ENCODE measurements at regions of chr4 and their contacts with region 1.

Region 1: GRCh38 chr4:89129080-89129640 is 17.8 kb downstream of the TIGD2 start:
- H3K4me3 Mint-ChIP-seq: no peak overlapping the region
- H3K27ac Mint-ChIP-seq: no peak overlapping the region
- H3K4me1 Mint-ChIP-seq: no peaks in the 10 kb centered on the region
- H3K27me3 Mint-ChIP-seq: no peaks in the 10 kb centered on the region

Region 2: DNA sequence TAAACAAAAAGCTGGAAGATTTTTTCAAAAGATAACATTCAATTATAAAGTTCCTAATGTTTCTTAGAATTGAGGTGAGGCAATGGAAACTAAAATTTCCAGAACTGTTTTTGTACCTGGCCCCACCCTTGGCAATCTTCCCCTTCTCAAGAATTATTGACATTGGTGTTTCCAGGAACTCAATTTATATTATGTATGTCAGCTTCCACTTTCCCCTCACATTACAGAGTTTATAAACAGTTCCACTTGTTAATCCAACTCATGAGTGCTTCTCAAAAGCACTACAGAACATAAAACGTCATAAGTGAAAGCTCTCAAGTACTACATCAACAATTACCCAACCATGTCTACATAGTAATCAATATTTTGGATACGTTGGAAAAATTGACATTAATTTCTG is 179.6 kb before region 1 on chr4:
- intact Hi-C with region 1: no loop called
- H3K4me3 Mint-ChIP-seq: no peak overlapping the region
- H3K27ac Mint-ChIP-seq: no peak overlapping the region
- H3K4me1 Mint-ChIP-seq: peaks cover 21% of the 10 kb centered on the region
- H3K27me3 Mint-ChIP-seq: no peaks in the 10 kb centered on the region

Region 3: DNA sequence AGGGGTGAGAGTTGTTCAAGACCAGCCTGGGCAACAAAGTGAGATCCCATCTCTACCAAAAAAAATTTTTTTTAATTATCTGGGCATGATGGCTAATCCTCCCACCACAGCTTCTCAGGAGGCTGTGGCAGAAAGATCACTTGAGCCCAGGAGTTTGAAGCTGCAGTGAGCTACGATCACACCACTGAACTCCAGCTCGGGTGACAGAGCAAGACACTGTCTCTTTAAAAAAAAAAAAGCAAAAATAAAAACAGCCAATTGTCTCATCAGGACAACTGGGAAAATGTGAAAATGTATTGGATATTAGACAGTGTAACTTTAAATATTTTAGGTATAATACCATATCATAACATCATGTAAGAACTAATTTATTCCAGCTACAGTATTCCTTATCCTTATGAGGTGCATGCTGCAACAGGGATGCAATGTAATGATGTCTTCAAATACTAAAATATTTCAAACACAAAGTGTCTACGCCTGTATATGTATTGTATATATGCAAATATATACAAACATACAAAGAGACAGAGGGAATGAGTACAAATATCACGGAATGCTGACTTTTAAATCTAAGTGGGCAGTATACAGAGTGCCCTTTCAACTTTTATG is 89.3 kb before region 1 on chr4:
- intact Hi-C with region 1: no loop called
- H3K4me3 Mint-ChIP-seq: no peak overlapping the region
- H3K27ac Mint-ChIP-seq: no peak overlapping the region
- H3K4me1 Mint-ChIP-seq: peaks cover 4% of the 10 kb centered on the region
- H3K27me3 Mint-ChIP-seq: no peaks in the 10 kb centered on the region

Region 4: DNA sequence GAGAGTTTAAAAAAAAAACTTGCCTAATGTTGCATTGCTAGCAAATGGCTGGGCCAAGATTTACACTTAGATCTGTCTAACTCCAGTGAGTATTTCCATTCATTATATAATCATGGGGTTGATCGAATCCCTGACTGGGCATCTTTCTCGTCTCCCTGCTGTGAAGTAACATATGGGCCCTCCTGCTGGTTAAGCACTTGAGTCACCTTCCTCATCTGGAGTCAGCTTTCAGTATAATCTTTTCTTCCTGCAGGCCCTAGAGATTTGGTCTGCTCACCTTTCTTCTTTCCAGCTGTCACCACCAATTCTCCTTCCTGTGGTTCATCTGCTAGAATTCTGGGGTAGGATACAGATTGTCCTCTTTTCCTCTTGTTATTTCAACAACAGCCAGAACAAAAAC is 23.8 kb after region 1 on chr4:
- intact Hi-C with region 1: loop called (anchors 1 kb)
- H3K4me3 Mint-ChIP-seq: no peak overlapping the region
- H3K27ac Mint-ChIP-seq: no peak overlapping the region
- H3K4me1 Mint-ChIP-seq: no peaks in the 10 kb centered on the region
- H3K27me3 Mint-ChIP-seq: no peaks in the 10 kb centered on the region

Measured in dendritic cell treated with granulocyte-macrophage colony-stimulating factor and Interleukin-4, amounts not matched to agents 40 ng/mL and 50 ng/mL, for 4 days (primary cell).